HepG2 (cell line): ENCODE measurements at regions of chr14 and their contacts with region 1.

Region 1: GRCh38 chr14:43475762-43476161 is 1031.3 kb downstream of the FSCB start:
- DNase-seq: no peak
- ATAC-seq: no peak
- H3K4me3 ChIP-seq: no peak overlapping the region
- H3K27ac ChIP-seq: no peak overlapping the region
- H3K4me1 ChIP-seq: 0 out of 2 replicates have a peak, but pooled peaks cover 5% of the 10 kb centered on the region
- H3K27me3 ChIP-seq: no peaks in the 10 kb centered on the region
- CTCF ChIP-seq: no peak
- EP300 ChIP-seq: no peak
- POLR2A ChIP-seq: no peak
- RAD21 ChIP-seq: no peak

Region 2: GRCh38 chr14:43204813-43205212 is 270.9 kb before region 1 on chr14:
- CTCF ChIA-PET with region 1: no interaction called
- POLR2A ChIA-PET with region 1: no interaction called
- in situ Hi-C with region 1: loop called (anchors 25 kb)
- intact Hi-C with region 1: no loop called
- DNase-seq: no peak
- ATAC-seq: no peak
- H3K4me3 ChIP-seq: no peak overlapping the region
- H3K27ac ChIP-seq: no peak overlapping the region
- H3K4me1 ChIP-seq: no peaks in the 10 kb centered on the region
- H3K27me3 ChIP-seq: no peaks in the 10 kb centered on the region
- CTCF ChIP-seq: no peak
- EP300 ChIP-seq: no peak
- POLR2A ChIP-seq: no peak
- RAD21 ChIP-seq: no peak

Region 3: DNA sequence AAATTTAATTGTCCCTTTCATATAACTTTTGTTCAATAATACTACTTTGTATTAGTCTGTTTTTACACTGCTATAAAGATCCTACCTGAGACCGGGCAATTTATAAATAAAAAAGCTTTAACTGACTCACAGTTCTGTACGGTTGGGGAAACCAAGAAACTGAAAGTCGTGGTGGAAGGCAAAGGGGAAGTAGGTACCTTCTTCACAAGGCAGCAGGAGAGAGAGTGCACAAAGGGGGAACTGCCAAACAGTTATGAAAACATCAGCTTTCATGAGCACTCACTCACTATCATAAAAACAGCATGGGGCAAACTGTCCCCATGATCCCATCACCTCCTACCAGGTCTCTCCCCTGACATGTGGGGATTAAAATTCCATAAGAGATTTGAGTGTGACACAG is 37.7 kb before region 1 on chr14:
- CTCF ChIA-PET with region 1: no interaction called
- POLR2A ChIA-PET with region 1: no interaction called
- in situ Hi-C with region 1: no loop called
- intact Hi-C with region 1: no loop called
- DNase-seq: no peak
- ATAC-seq: no peak
- H3K4me3 ChIP-seq: no peak overlapping the region
- H3K27ac ChIP-seq: no peak overlapping the region
- H3K4me1 ChIP-seq: no peaks in the 10 kb centered on the region
- H3K27me3 ChIP-seq: no peaks in the 10 kb centered on the region
- CTCF ChIP-seq: no peak
- EP300 ChIP-seq: no peak
- POLR2A ChIP-seq: no peak
- RAD21 ChIP-seq: no peak

Region 4: GRCh38 chr14:43503590-43503907 is 27.8 kb after region 1 on chr14:
- CTCF ChIA-PET with region 1: no interaction called
- POLR2A ChIA-PET with region 1: no interaction called
- in situ Hi-C with region 1: no loop called
- intact Hi-C with region 1: no loop called
- DNase-seq: peak; percentile 17
- ATAC-seq: no peak
- H3K4me3 ChIP-seq: no peak overlapping the region
- H3K27ac ChIP-seq: no peak overlapping the region
- H3K4me1 ChIP-seq: no peaks in the 10 kb centered on the region
- H3K27me3 ChIP-seq: no peaks in the 10 kb centered on the region
- CTCF ChIP-seq: peak; percentile 39
- EP300 ChIP-seq: no peak
- POLR2A ChIP-seq: no peak
- RAD21 ChIP-seq: no peak; the same call in 1 of the 2 replicates